Psoas muscle (tissue), 8 donors: ENCODE measurements at regions of chr3 and their contacts with region 1.

Region 1: DNA sequence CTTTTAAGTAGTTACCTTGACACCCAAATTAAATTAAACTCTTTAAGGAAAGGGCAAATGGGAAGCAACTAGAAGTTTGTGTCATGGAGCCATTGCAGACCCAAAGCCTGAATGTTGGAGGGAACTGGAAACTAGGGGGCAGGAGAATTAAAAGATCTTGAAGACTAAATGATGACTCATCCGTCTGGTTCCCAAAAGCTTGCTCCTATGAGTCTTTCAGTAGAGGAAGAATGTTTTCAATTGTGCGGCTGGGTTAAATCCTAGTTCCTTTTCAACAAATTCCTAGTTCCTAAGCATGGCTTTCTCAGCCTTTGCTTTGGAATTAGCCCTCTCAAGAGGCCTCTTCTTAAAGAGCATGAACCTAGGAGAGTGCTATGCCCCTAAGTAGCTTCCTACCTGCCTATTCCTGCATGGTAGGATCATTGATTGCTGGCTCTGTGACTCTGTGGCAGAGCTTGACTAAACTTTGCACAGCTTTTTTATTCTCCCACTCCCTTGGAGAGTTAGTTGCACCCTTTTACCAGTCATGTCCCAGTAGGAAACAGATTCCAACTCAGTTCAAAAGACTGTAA is 17.7 kb downstream of the CLEC3B start:
- DNase-seq: no peak
- ATAC-seq: no peak
- H3K4me3 ChIP-seq: no peak overlapping the region
- H3K27ac ChIP-seq: no peak overlapping the region
- H3K4me1 ChIP-seq: peaks cover 13% of the 10 kb centered on the region
- H3K27me3 ChIP-seq: no peaks in the 10 kb centered on the region
- CTCF ChIP-seq: no peak

Region 2: DNA sequence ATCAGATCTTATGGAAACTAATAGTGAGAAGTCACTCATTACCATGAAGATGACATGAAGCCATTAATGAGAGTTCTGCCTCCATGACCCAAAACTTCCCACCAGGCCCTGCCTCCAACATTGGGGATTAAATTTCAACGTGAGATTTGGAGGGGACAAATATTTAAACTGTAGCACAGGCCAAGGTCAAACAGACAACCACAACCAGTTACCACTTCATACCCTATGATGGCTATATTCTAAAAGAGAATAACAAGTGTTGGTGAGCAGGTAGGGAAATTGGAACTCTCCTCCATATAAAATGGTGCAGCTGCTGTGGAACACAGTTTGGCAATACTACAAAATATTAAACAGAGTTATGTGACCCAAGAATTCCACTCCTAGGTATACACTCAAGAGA is 668.4 kb before region 1 on chr3:
- intact Hi-C with region 1: no loop called
- DNase-seq: no peak
- ATAC-seq: no peak
- H3K4me3 ChIP-seq: no peak overlapping the region
- H3K27ac ChIP-seq: no peak overlapping the region
- H3K4me1 ChIP-seq: no peaks in the 10 kb centered on the region
- H3K27me3 ChIP-seq: no peaks in the 10 kb centered on the region
- CTCF ChIP-seq: no peak

Region 3: GRCh38 chr3:44674211-44674610 is 369.6 kb before region 1 on chr3:
- intact Hi-C with region 1: no loop called
- DNase-seq: no peak
- ATAC-seq: no peak
- H3K4me3 ChIP-seq: no peak overlapping the region
- H3K27ac ChIP-seq: no peak overlapping the region
- H3K4me1 ChIP-seq: no peaks in the 10 kb centered on the region
- H3K27me3 ChIP-seq: no peaks in the 10 kb centered on the region
- CTCF ChIP-seq: no peak

Region 4: GRCh38 chr3:45011756-45012508 is 31.9 kb before region 1 on chr3:
- intact Hi-C with region 1: no loop called
- DNase-seq: peak; percentile 71 to 84
- ATAC-seq: peak; percentile 52 to 86 (median 82)
- H3K4me3 ChIP-seq: no peak overlapping the region
- H3K27ac ChIP-seq: peak overlapping the region; percentile 72
- H3K4me1 ChIP-seq: peaks cover 39% of the 10 kb centered on the region
- H3K27me3 ChIP-seq: no peaks in the 10 kb centered on the region
- CTCF ChIP-seq: no peak

Region 5: GRCh38 chr3:45078910-45079522 is 35.2 kb after region 1 on chr3:
- intact Hi-C with region 1: no loop called
- DNase-seq: no peak
- ATAC-seq: peak in 1 of 4 donors; percentile 22
- H3K4me3 ChIP-seq: no peak overlapping the region
- H3K27ac ChIP-seq: no peak overlapping the region
- H3K4me1 ChIP-seq: no peaks in the 10 kb centered on the region
- H3K27me3 ChIP-seq: no peaks in the 10 kb centered on the region
- CTCF ChIP-seq: no peak

Region 6: GRCh38 chr3:45109771-45110508 is 66.1 kb after region 1 on chr3:
- intact Hi-C with region 1: loop called in 1 of 2 experiments (anchors 5 kb)
- DNase-seq: no peak
- ATAC-seq: no peak
- H3K4me3 ChIP-seq: no peak overlapping the region
- H3K27ac ChIP-seq: no peak overlapping the region
- H3K4me1 ChIP-seq: peaks cover 21% of the 10 kb centered on the region
- H3K27me3 ChIP-seq: no peaks in the 10 kb centered on the region
- CTCF ChIP-seq: no peak

Region 7: DNA sequence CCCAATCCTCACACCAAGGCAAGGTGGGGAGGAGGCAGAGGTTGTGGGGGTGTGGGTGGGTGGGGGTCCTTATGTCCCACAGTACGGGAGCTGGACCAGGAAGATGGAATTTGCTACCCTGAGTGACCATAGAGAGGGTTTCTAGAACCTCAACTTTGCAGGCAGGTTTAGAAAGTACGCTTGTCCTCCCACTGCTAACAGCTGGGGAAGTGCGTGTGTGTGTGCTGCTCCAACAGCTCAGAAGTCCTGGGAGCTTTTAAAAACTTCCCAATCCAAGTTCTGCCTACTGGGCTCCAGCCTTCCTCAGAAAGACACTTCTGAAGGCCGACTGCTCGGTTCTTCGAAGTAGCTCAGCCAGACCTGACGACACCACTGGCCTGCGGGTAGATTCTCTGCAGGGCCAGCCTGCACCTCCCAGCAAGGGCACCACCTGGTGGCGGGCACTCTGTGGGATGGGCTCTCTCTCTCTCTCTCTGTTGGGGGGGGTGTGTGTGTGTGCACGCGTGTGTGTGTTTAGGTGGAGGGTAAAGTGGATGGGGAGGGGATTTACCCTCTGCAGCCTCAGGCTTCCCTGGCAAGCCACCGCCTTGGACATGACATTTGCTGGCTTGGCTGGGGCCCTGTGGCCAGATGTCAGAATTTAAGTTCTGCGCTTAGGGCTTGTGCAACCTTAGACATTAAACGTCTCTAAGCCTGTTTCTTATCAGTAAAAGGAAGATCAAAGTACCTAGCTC is 166.7 kb after region 1 on chr3:
- intact Hi-C with region 1: loop called in 1 of 2 experiments (anchors 1 kb)
- DNase-seq: peak; percentile 86 to 93
- ATAC-seq: peak; percentile 98 to 100 (median 99)
- H3K4me3 ChIP-seq: no peak overlapping the region
- H3K27ac ChIP-seq: no peak overlapping the region
- H3K4me1 ChIP-seq: peaks cover 7% of the 10 kb centered on the region
- H3K27me3 ChIP-seq: no peaks in the 10 kb centered on the region
- CTCF ChIP-seq: peak; percentile 74

Region 8: GRCh38 chr3:45409921-45410320 is 366.1 kb after region 1 on chr3:
- intact Hi-C with region 1: loop called in 1 of 2 experiments (anchors 10 kb)
- DNase-seq: no peak
- ATAC-seq: peak in 3 of 4 donors; percentile 56 to 82 (median 82)
- H3K4me3 ChIP-seq: no peak overlapping the region
- H3K27ac ChIP-seq: peak overlapping the region; percentile 0
- H3K4me1 ChIP-seq: peaks cover 15% of the 10 kb centered on the region
- H3K27me3 ChIP-seq: no peaks in the 10 kb centered on the region
- CTCF ChIP-seq: no peak

Region 9: GRCh38 chr3:45656575-45657363 is 613.0 kb after region 1 on chr3:
- intact Hi-C with region 1: loop called in 1 of 2 experiments (anchors 10 kb)
- DNase-seq: peak; percentile 93
- ATAC-seq: peak; percentile 86 to 90 (median 88)
- H3K4me3 ChIP-seq: no peak overlapping the region
- H3K27ac ChIP-seq: peak overlapping the region; percentile 66
- H3K4me1 ChIP-seq: peaks cover 59% of the 10 kb centered on the region
- H3K27me3 ChIP-seq: no peaks in the 10 kb centered on the region
- CTCF ChIP-seq: peak; percentile 95